T-cell (primary cell): ENCODE measurements at regions of chr16 and their contacts with region 1.

Region 1: DNA sequence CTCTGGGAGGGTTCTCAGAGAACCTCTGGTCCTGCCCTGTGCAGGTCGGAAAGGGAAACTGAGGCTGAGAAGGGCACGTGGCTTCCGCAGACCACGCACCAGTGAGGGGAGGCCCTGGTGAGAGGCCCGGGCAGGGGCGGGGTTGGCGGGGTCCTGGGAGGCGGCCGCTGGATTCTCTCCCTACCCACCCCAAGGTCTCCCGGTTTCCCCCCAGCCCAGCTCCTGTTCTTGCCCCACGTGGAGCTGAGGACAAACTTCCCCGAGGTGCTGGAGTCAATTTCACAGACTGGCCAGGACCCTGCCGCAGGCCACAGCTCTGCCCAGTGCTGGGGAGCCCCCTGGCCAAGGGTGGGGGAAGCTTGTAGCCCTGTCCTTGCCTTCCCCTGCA is 11.5 kb downstream of the CCL17 start:
- DNase-seq: no peak
- ATAC-seq: no peak
- H3K4me3 ChIP-seq: no peak overlapping the region
- H3K4me3 Mint-ChIP-seq: peak overlapping the region in 1 of 3 donors; percentile 6
- H3K27ac ChIP-seq: peak overlapping the region; percentile 23
- H3K27ac Mint-ChIP-seq: no peak overlapping the region
- H3K4me1 ChIP-seq: peaks cover 0 to 27% of the 10 kb centered on the region in 2 experiments
- H3K4me1 Mint-ChIP-seq: peaks cover 20 to 26% (median 22%) of the 10 kb centered on the region in 3 donors
- H3K27me3 ChIP-seq: peaks cover 0 to 14% of the 10 kb centered on the region in 2 experiments
- H3K27me3 Mint-ChIP-seq: no peaks in the 10 kb centered on the region

Region 2: GRCh38 chr16:57300387-57301125 is 115.6 kb before region 1 on chr16:
- CTCF ChIA-PET with region 1: interaction called, 9 to 37 read pairs
- POLR2A ChIA-PET with region 1: no interaction called
- DNase-seq: peak; percentile 95 to 100 (median 99)
- ATAC-seq: peak; percentile 86 to 97 (median 94)
- H3K4me3 ChIP-seq: peak overlapping the region; percentile 49 to 62
- H3K4me3 Mint-ChIP-seq: no peak overlapping the region
- H3K27ac ChIP-seq: peak overlapping the region; percentile 83
- H3K27ac Mint-ChIP-seq: no peak overlapping the region
- H3K4me1 ChIP-seq: peaks cover 11 to 49% of the 10 kb centered on the region in 2 experiments
- H3K4me1 Mint-ChIP-seq: peaks cover 13 to 25% (median 23%) of the 10 kb centered on the region in 3 donors
- H3K27me3 ChIP-seq: no peaks in the 10 kb centered on the region
- H3K27me3 Mint-ChIP-seq: no peaks in the 10 kb centered on the region

Region 3: GRCh38 chr16:57383276-57384247 is 32.6 kb before region 1 on chr16:
- CTCF ChIA-PET with region 1: no interaction called
- POLR2A ChIA-PET with region 1: no interaction called
- DNase-seq: no peak
- ATAC-seq: no peak
- H3K4me3 ChIP-seq: no peak overlapping the region
- H3K4me3 Mint-ChIP-seq: no peak overlapping the region
- H3K27ac ChIP-seq: no peak overlapping the region
- H3K27ac Mint-ChIP-seq: no peak overlapping the region
- H3K4me1 ChIP-seq: peaks cover 0 to 6% of the 10 kb centered on the region in 2 experiments
- H3K4me1 Mint-ChIP-seq: peaks cover 0 to 9% (median 8%) of the 10 kb centered on the region in 3 donors
- H3K27me3 ChIP-seq: peaks cover 0 to 12% of the 10 kb centered on the region in 2 experiments
- H3K27me3 Mint-ChIP-seq: no peaks in the 10 kb centered on the region

Region 4: GRCh38 chr16:57432989-57433388 is 16.9 kb after region 1 on chr16:
- CTCF ChIA-PET with region 1: interaction called, 3 to 16 read pairs
- POLR2A ChIA-PET with region 1: no interaction called
- DNase-seq: peak in 1 of 35 experiments; percentile 22
- ATAC-seq: peak; percentile 28 to 68 (median 58)
- H3K4me3 ChIP-seq: no peak overlapping the region
- H3K4me3 Mint-ChIP-seq: peak overlapping the region in 1 of 3 donors; percentile 52
- H3K27ac ChIP-seq: no peak overlapping the region
- H3K27ac Mint-ChIP-seq: peak overlapping the region; percentile 66 to 80
- H3K4me1 ChIP-seq: peaks cover 17 to 24% of the 10 kb centered on the region in 2 experiments
- H3K4me1 Mint-ChIP-seq: peaks cover 29 to 33% (median 32%) of the 10 kb centered on the region in 3 donors
- H3K27me3 ChIP-seq: no peaks in the 10 kb centered on the region
- H3K27me3 Mint-ChIP-seq: no peaks in the 10 kb centered on the region

Region 5: DNA sequence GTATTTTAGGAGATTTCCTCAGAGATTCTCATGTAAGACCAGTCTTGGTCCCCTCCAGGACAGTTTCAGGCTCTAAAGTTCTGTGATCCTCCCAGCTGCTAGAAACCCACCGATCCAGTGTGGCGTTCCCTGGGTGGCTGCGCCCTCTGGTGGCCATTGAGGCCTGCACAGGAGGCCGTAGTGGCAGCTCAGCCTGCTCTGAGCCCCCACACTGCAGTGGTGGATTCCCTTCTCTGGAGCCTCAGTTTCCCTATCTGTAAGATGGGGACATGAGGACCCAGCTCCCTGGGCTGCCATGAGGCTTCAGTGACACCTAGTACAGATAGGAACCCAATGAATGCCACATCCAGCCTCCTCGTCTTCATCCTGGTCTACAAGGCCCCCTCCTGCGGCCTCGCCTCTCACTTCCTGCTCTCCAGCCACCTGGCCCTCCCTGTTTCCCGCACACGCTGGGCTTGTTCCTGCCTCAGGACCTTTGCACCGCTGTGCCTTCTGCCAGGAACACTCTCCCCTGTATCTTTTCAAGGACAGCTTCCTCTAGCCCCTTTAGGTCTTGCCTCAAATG is 103.8 kb after region 1 on chr16:
- CTCF ChIA-PET with region 1: interaction called, 5 to 11 read pairs
- POLR2A ChIA-PET with region 1: no interaction called
- DNase-seq: peak; percentile 41 to 88 (median 75)
- ATAC-seq: peak; percentile 90 to 99 (median 94)
- H3K4me3 ChIP-seq: no peak overlapping the region
- H3K4me3 Mint-ChIP-seq: no peak overlapping the region
- H3K27ac ChIP-seq: no peak overlapping the region
- H3K27ac Mint-ChIP-seq: no peak overlapping the region
- H3K4me1 ChIP-seq: peaks cover 0 to 8% of the 10 kb centered on the region in 2 experiments
- H3K4me1 Mint-ChIP-seq: peaks cover 5 to 11% (median 7%) of the 10 kb centered on the region in 3 donors
- H3K27me3 ChIP-seq: no peaks in the 10 kb centered on the region
- H3K27me3 Mint-ChIP-seq: no peaks in the 10 kb centered on the region